HEK293 (cell line): ENCODE measurements at regions of chrX and their contacts with region 1.

Region 1: DNA sequence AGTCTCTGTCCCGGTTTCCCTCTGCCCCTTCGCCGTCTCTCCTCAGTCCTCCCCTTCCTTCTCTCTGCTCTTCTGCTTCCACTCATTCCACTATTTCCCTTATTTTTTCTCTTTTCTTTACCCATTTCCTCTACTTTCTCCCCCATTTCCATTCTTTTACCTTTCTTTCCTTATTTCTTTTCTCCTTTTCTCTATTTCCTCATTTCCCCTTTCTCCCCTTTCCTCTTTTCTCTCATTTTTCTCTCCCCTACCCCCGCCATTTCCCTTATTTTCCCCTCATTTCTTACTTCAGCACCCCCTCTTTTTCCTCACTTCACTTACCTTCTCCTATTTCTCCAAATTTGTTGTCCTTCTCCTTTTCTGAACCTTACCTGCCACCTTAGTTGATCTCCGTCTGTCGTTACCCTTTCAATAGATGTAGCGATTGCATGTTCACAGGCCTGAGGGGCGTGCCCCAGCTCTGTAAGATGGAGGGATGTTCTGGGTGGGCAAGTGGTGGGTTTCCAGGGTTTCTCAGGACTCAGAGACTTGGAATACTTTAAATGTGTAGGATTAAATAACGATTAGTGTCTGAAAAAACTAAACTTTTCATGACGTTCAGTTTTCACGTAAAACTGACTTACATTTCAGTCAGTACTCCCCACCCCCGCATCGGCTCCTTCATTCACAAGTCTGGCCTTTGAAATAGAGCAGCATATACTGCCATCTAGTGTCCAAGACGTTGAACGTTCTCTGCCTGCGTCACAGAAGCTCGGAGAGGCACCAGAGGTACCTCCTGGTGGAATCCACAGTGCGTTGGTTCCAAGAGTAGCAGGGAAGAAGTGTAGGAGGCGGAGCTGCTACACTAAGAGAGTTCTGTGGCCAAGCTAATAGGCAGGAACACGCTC is 641 bp upstream of the NCBP2L start:
- H3K4me3 ChIP-seq: no peak overlapping the region
- H3K27ac ChIP-seq: peak overlapping the region; percentile 57
- H3K4me1 ChIP-seq: peaks cover 3% of the 10 kb centered on the region; the same call in 1 of the 2 replicates
- CTCF ChIP-seq: peak; percentile 87

Region 2: DNA sequence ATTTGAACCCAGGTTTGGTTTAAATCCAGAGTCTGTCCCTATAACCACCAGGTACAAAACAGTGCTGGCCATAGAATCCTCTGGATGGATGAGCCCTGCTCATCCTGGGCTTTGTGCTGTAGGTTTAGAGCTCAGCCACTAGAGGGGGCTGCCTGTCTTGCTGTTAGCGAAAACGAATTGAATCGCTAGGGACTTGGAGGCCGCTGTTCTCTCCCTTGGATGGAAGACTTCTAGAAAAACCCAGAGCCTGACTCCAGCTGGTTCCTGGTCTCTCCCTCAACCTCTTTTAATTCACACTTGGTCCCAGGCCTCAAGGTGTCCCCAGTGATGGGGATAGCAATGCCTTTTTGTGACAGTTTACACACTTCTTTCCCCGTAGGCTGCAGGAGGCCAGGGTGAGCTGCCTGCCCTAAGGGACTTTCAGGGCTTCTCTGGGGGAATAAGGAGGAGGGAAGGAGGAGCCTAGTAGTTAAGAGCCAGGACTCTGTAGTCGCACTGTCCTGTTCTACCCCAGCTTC is 882.4 kb before region 1 on chrX:
- CTCF ChIA-PET with region 1: interaction called, 11 read pairs
- POLR2A ChIA-PET with region 1: no interaction called
- H3K4me3 ChIP-seq: no peak overlapping the region
- H3K27ac ChIP-seq: no peak overlapping the region
- H3K4me1 ChIP-seq: no peaks in the 10 kb centered on the region; the same call in 1 of the 2 replicates
- CTCF ChIP-seq: peak; percentile 79

Region 3: DNA sequence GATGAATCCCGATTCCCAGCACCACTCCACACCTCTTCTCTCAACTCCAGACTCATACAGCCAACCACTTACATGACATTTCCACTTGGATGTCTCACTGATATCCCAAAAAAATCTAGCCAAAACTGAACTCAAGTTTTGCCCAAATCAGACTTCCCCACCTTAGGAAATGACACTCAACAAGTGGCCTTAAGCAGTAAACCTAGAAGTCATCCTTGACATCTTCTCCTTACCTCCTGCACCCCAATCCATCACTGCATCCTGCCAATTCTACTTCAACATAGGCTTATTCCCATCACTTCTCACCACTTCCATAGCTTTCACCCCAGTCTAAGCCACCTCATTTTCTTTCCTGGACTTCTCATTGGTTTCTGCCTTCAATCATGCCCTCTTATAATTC is 109.5 kb before region 1 on chrX:
- CTCF ChIA-PET with region 1: interaction called, 155 read pairs
- POLR2A ChIA-PET with region 1: interaction called, 6 read pairs
- H3K4me3 ChIP-seq: no peak overlapping the region
- H3K27ac ChIP-seq: no peak overlapping the region
- H3K4me1 ChIP-seq: peaks cover 3% of the 10 kb centered on the region; the same call in 1 of the 2 replicates
- CTCF ChIP-seq: no peak

Region 4: GRCh38 chrX:107716816-107717700 is 59.8 kb before region 1 on chrX:
- CTCF ChIA-PET with region 1: interaction called, 65 read pairs
- POLR2A ChIA-PET with region 1: interaction called, 33 read pairs
- H3K4me3 ChIP-seq: peak overlapping the region; percentile 44
- H3K27ac ChIP-seq: peak overlapping the region; percentile 87
- H3K4me1 ChIP-seq: peaks cover 10% of the 10 kb centered on the region
- CTCF ChIP-seq: peak; percentile 13; the same call in 1 of the 2 replicates

Region 5: GRCh38 chrX:107747596-107748161 is 29.2 kb before region 1 on chrX:
- CTCF ChIA-PET with region 1: interaction called, 13 read pairs
- POLR2A ChIA-PET with region 1: interaction called, 3 read pairs
- H3K4me3 ChIP-seq: no peak overlapping the region
- H3K27ac ChIP-seq: peak overlapping the region; percentile 29; the same call in 1 of the 2 replicates
- H3K4me1 ChIP-seq: peaks cover 12% of the 10 kb centered on the region
- CTCF ChIP-seq: no peak